Transverse colon (tissue), 4 donors: ENCODE measurements at regions of chr1 and their contacts with region 1.

Region 1: GRCh38 chr1:204989266-204990058 is 53.5 kb upstream of the CNTN2 start:
- DNase-seq: peak; percentile 59
- H3K4me3 ChIP-seq: no peak overlapping the region
- H3K27ac ChIP-seq: peak overlapping the region in 1 of 4 donors; percentile 46
- H3K4me1 ChIP-seq: no peaks in the 10 kb centered on the region
- H3K27me3 ChIP-seq: no peaks in the 10 kb centered on the region
- CTCF ChIP-seq: peak; percentile 80 to 91 (median 86)
- EP300 ChIP-seq: no peak
- POLR2A ChIP-seq: no peak

Region 2: GRCh38 chr1:205056188-205056611 is 66.7 kb after region 1 on chr1:
- in situ Hi-C with region 1: loop called in 1 of 4 experiments (anchors 10 kb)
- intact Hi-C with region 1: loop called (anchors 5 kb)
- DNase-seq: no peak
- H3K4me3 ChIP-seq: no peak overlapping the region
- H3K27ac ChIP-seq: no peak overlapping the region
- H3K4me1 ChIP-seq: no peaks in the 10 kb centered on the region
- H3K27me3 ChIP-seq: peaks cover 4% of the 10 kb centered on the region
- CTCF ChIP-seq: no peak
- EP300 ChIP-seq: no peak
- POLR2A ChIP-seq: no peak

Region 3: GRCh38 chr1:205061665-205062069 is 72.2 kb after region 1 on chr1:
- in situ Hi-C with region 1: loop called in 1 of 4 experiments (anchors 10 kb)
- intact Hi-C with region 1: loop called (anchors 5 kb)
- DNase-seq: peak; percentile 64
- H3K4me3 ChIP-seq: no peak overlapping the region
- H3K27ac ChIP-seq: no peak overlapping the region
- H3K4me1 ChIP-seq: peaks cover 0 to 6% (median 3%) of the 10 kb centered on the region in 4 donors
- H3K27me3 ChIP-seq: no peaks in the 10 kb centered on the region
- CTCF ChIP-seq: peak; percentile 73 to 81 (median 78)
- EP300 ChIP-seq: no peak
- POLR2A ChIP-seq: no peak

Region 4: GRCh38 chr1:205077158-205077933 is 87.9 kb after region 1 on chr1:
- in situ Hi-C with region 1: no loop called
- intact Hi-C with region 1: no loop called
- DNase-seq: no peak
- H3K4me3 ChIP-seq: no peak overlapping the region
- H3K27ac ChIP-seq: no peak overlapping the region
- H3K4me1 ChIP-seq: no peaks in the 10 kb centered on the region
- H3K27me3 ChIP-seq: no peaks in the 10 kb centered on the region
- CTCF ChIP-seq: no peak
- EP300 ChIP-seq: no peak
- POLR2A ChIP-seq: no peak

Region 5: DNA sequence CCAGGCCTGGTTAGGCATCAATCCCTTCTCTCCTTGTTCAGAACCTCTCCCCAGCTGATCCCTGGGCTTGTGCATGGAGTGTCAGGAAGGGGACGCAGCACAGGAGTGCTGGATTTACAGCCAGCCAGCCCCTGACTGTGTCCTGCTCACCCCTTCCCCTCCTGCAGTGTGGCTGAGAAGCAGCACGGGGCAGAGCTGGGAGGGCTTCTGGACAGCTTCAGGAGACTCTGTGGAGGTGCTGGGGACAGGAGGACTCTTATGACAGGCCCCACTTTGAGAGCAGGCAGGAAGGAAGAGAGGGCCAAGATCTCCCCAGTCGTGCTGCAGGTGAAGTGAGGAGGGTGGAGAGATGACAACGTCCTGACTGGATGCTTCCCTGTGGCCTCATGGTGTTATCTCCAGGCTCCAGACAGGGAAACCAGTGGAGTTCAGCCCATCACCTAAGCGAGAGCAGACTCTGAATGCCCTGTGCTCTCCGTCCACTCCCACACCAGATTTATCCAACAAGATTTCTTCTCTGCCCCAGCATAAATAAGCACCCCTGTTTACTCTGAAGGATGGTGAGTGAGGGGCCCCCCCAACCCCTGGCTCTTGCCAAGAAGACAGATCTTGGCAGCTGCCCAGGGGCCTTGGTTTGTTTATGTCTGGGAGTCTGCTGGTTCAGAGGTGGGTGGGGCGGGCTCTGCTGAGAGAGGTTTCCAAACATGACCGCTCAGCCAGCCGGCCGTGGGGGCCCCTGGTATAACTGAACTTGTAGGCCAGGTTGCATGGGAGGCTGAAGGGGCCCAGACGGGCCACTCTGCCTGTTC is 259.5 kb after region 1 on chr1:
- in situ Hi-C with region 1: loop called in 2 of 4 experiments (anchors 10 kb)
- intact Hi-C with region 1: no loop called
- DNase-seq: peak; percentile 73
- H3K4me3 ChIP-seq: no peak overlapping the region
- H3K27ac ChIP-seq: peak overlapping the region; percentile 9 to 67 (median 42)
- H3K4me1 ChIP-seq: peaks cover 21 to 35% (median 27%) of the 10 kb centered on the region in 4 donors
- H3K27me3 ChIP-seq: no peaks in the 10 kb centered on the region
- CTCF ChIP-seq: no peak
- EP300 ChIP-seq: no peak
- POLR2A ChIP-seq: no peak

Region 6: GRCh38 chr1:205255941-205256780 is 266.7 kb after region 1 on chr1:
- in situ Hi-C with region 1: loop called in 1 of 4 experiments (anchors 10 kb)
- intact Hi-C with region 1: no loop called
- DNase-seq: peak; percentile 93
- H3K4me3 ChIP-seq: no peak overlapping the region
- H3K27ac ChIP-seq: peak overlapping the region in 1 of 4 donors; percentile 22
- H3K4me1 ChIP-seq: peaks cover 0 to 16% (median 0%) of the 10 kb centered on the region in 4 donors
- H3K27me3 ChIP-seq: no peaks in the 10 kb centered on the region
- CTCF ChIP-seq: peak; percentile 94 to 99 (median 97)
- EP300 ChIP-seq: no peak
- POLR2A ChIP-seq: no peak